CD4-positive, alpha-beta memory T cell (primary cell): ENCODE measurements at regions of chr1 and their contacts with region 1.

Region 1: DNA sequence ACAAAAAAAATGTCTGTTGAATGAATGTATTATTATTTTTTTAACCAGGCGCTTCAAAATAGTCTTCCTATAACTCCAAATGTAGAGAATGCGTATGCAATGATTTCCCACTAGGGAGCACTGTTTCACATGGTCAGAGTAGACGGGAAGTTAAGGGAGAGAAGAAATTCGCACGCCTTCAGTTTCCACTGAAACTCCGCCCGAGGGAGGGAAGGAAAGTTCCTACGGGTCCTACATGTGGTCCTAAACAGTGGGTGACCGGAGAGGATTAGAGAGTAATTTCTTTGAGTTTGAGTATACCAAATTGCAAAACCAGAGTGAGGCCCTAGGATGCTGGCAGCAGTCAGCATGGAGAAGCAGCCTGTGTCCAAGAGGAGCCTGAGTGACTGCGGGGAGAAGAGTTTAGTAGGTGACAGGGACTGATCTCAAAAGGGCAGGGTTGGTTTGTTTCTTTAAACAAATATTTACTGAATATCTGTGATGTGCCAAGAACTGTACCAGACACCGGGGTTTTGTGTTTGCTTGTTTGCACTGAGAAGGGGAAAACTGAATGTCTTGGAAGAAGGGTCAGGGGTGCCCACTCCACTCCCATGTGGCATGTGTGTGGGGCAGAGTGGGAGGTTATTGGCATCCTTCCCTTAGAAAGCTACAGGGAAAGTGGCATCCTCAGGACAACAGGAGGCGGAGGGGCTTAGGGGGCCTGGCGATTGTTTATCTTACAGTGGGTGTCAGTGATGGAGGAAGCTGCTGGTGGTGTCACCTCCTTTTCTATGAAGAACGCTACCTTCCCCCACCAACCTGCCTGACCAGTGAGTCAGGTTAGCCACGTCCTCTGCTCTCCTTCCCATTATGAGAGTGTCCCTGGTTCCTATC is 22.8 kb downstream of the RNU5D-1 start:
- DNase-seq: peak; percentile 39 to 62 (median 54)
- H3K4me3 ChIP-seq: no peak overlapping the region
- H3K4me3 Mint-ChIP-seq: peak overlapping the region; percentile 21 to 73 (median 58)
- H3K27ac ChIP-seq: no peak overlapping the region
- H3K27ac Mint-ChIP-seq: peak overlapping the region in 4 of 7 donors; percentile 5 to 64 (median 36)
- H3K4me1 ChIP-seq: peaks cover 11% of the 10 kb centered on the region
- H3K4me1 Mint-ChIP-seq: peaks cover 4 to 15% (median 5%) of the 10 kb centered on the region in 4 donors
- H3K27me3 ChIP-seq: no peaks in the 10 kb centered on the region
- H3K27me3 Mint-ChIP-seq: peaks cover 0 to 5% of the 10 kb centered on the region in 2 donors

Region 2: DNA sequence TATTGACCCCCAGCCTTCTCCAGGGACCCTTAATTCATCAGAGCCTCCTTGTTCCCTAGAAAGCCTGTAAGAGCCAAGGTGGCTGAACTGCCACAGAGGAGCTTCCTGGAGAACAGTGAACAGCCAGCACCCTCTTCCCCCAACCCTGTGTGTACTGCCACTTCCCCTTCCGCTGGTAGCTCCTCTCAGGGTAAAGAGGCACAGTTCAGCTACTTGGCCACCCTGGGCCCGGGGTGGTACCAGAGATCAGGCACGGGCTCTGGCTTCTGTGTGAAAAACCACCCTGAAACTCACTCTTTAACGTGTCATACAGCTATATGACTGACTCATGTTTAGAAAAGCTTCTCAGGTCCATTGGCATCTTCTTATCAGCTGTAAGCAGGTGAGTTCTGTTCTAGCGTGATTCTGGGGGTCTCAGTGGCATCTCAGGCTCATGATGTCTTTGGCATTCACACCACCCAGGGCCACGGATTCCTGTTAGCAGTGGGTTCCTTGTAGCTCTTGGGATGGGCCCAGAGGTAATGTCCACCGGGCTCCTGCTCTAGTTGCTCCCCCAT is 11.3 kb before region 1 on chr1:
- CTCF ChIA-PET with region 1: interaction called, 13 read pairs
- POLR2A ChIA-PET with region 1: no interaction called
- intact Hi-C with region 1: no loop called
- DNase-seq: peak in 2 of 5 donors; percentile 29 to 43
- H3K4me3 ChIP-seq: no peak overlapping the region
- H3K4me3 Mint-ChIP-seq: peak overlapping the region in 4 of 8 donors; percentile 29 to 83 (median 52)
- H3K27ac ChIP-seq: no peak overlapping the region
- H3K27ac Mint-ChIP-seq: peak overlapping the region; percentile 27 to 88 (median 84)
- H3K4me1 ChIP-seq: peaks cover 12% of the 10 kb centered on the region
- H3K4me1 Mint-ChIP-seq: peaks cover 4 to 19% (median 11%) of the 10 kb centered on the region in 4 donors
- H3K27me3 ChIP-seq: no peaks in the 10 kb centered on the region
- H3K27me3 Mint-ChIP-seq: no peaks in the 10 kb centered on the region